Left colon (tissue), 2 donors: ENCODE measurements at regions of chr17 and their contacts with region 1.

Region 1: DNA sequence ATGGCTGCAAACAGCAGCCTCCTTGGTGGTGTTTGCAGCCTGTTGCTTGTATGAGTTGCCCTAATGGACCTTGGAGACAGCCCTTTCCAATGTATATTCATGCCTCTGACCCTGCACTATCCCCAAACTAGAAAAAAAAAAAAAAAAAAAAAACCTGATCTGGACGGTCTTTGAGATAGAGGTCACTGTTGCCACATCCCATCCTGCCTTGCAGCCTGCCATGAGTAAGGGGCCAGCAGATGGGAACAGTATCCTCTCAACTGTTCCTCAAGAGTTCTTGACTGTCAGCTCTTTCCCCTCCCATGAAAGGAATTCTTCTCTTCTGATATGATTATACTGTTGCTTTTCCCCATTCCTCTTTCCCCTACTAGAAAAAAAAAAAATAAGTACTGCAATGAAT is 152.4 kb downstream of the SSH2 start:
- DNase-seq: no peak
- ATAC-seq: no peak

Region 2: DNA sequence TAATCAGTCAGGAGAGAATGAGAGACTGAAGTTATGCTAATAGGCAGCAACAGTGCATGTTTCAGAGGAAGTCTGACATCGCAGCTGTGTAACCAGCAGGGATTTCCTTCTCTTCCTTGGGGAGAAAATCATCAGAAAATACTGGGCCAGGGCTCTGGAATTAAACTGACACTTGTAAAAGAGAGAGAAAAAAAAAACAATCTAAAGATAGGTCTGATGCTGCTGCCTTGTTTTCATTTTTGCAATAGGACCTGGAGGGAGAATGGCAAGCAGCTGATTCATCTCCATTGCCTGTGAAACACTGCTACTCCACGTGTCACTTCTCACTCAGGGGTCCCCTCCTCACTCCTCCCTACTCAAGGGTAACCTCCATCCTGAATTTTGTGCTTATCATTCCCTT is 137.2 kb before region 1 on chr17:
- intact Hi-C with region 1: loop called in 1 of 2 experiments (anchors 5 kb)
- DNase-seq: no peak
- ATAC-seq: no peak